ENCODE measurements at regions of chr2 and their contacts with region 1.

Region 1: GRCh38 chr2:197499594-197500526 is at the starts of genes HSPD1 and HSPE1:
- DNase-seq: peak; percentile 93 to 99 (median 97)
- ATAC-seq: peak; percentile 86
- H3K4me3 ChIP-seq: peak within 1 kb of the TSS; percentile 61 to 76
- H3K4me3 Mint-ChIP-seq: peak within 1 kb of the TSS; percentile 92
- H3K27ac ChIP-seq: peak within 1 kb of the TSS; percentile 96
- H3K27ac Mint-ChIP-seq: peak within 1 kb of the TSS; percentile 97
- H3K4me1 ChIP-seq: peaks cover 55% of the 10 kb centered on the region
- H3K4me1 Mint-ChIP-seq: peaks cover 62% of the 10 kb centered on the region
- H3K27me3 ChIP-seq: no peaks in the 10 kb centered on the region
- H3K27me3 Mint-ChIP-seq: no peaks in the 10 kb centered on the region
- CTCF ChIP-seq: no peak
- total RNA-seq, gene HSPD1: 162 to 163 TPM
- total RNA-seq, gene HSPE1: 76.7 to 76.8 TPM

Region 2: GRCh38 chr2:196926562-196927375 is 573.1 kb before region 1 on chr2 and contains the start of gene PGAP1:
- CTCF ChIA-PET with region 1: no interaction called
- POLR2A ChIA-PET with region 1: no interaction called
- intact Hi-C with region 1: loop called in 1 of 2 experiments (anchors 10 kb)
- DNase-seq: peak; percentile 65 to 91 (median 81)
- ATAC-seq: peak; percentile 74
- H3K4me3 ChIP-seq: peak within 1 kb of the TSS; percentile 88 to 96
- H3K4me3 Mint-ChIP-seq: peak within 1 kb of the TSS; percentile 97
- H3K27ac ChIP-seq: peak within 1 kb of the TSS; percentile 66 to 69
- H3K27ac Mint-ChIP-seq: peak within 1 kb of the TSS; percentile 90
- H3K4me1 ChIP-seq: peaks cover 23% of the 10 kb centered on the region
- H3K4me1 Mint-ChIP-seq: peaks cover 33% of the 10 kb centered on the region
- H3K27me3 ChIP-seq: no peaks in the 10 kb centered on the region
- H3K27me3 Mint-ChIP-seq: no peaks in the 10 kb centered on the region
- CTCF ChIP-seq: no peak
- total RNA-seq, gene PGAP1: 11.6 to 12.3 TPM

Region 3: GRCh38 chr2:197434541-197435513 is 65.0 kb before region 1 on chr2 and contains the start of gene SF3B1:
- CTCF ChIA-PET with region 1: no interaction called
- POLR2A ChIA-PET with region 1: interaction called, 41 read pairs
- intact Hi-C with region 1: loop called (anchors 1 to 2 kb)
- DNase-seq: peak; percentile 98 to 100 (median 99)
- ATAC-seq: peak; percentile 96
- H3K4me3 ChIP-seq: peak within 1 kb of the TSS; percentile 95 to 99
- H3K4me3 Mint-ChIP-seq: peak within 1 kb of the TSS; percentile 100
- H3K27ac ChIP-seq: peak within 1 kb of the TSS; percentile 98 to 99
- H3K27ac Mint-ChIP-seq: peak within 1 kb of the TSS; percentile 100
- H3K4me1 ChIP-seq: peaks cover 43% of the 10 kb centered on the region
- H3K4me1 Mint-ChIP-seq: peaks cover 53% of the 10 kb centered on the region
- H3K27me3 ChIP-seq: no peaks in the 10 kb centered on the region
- H3K27me3 Mint-ChIP-seq: no peaks in the 10 kb centered on the region
- CTCF ChIP-seq: no peak
- total RNA-seq, gene SF3B1: 525 to 526 TPM

Region 4: DNA sequence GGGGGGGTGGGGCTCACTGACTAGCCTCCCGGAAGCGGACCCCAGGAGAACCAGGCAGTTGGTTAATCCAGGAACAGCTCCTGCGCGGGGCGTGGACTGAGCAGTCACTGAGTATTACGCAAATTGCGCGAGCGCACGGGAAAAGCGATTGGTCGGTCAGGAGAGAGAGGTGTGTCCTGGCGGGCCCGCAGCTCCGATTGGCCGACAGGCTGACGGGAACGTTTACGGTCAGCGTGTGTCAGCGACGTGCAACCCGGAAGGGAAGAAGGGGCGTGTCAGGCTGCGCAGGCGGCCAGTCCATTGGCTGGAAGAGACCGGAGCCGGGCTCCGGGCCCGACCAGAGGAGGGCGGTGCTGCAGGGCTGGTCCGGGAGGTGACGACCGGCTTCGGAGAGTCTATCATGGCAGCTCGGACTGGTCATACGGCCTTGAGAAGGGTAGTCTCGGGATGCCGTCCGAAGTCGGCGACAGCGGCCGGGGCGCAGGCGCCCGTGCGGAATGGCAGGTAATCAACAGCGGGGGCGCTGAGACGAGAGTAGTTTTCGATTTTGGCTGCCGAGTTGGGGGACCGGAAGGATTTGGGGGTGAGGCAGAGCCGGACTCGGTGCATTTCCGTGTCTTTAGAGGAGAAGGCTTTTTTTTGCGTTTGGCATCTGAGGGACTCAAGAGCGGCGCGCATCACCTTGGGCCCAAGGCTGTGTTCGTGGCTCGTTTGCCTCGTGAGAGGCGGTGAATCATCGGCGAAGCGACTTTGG is 46.5 kb before region 1 on chr2 and contains the start of gene COQ10B:
- CTCF ChIA-PET with region 1: no interaction called
- POLR2A ChIA-PET with region 1: interaction called, 21 read pairs
- intact Hi-C with region 1: loop called (anchors 1 kb)
- DNase-seq: peak; percentile 95 to 100 (median 97)
- ATAC-seq: peak; percentile 87
- H3K4me3 ChIP-seq: peak within 1 kb of the TSS; percentile 62 to 74
- H3K4me3 Mint-ChIP-seq: peak within 1 kb of the TSS; percentile 99
- H3K27ac ChIP-seq: peak within 1 kb of the TSS; percentile 93 to 95
- H3K27ac Mint-ChIP-seq: peak within 1 kb of the TSS; percentile 100
- H3K4me1 ChIP-seq: peaks cover 28% of the 10 kb centered on the region
- H3K4me1 Mint-ChIP-seq: peaks cover 48% of the 10 kb centered on the region
- H3K27me3 ChIP-seq: no peaks in the 10 kb centered on the region
- H3K27me3 Mint-ChIP-seq: no peaks in the 10 kb centered on the region
- CTCF ChIP-seq: no peak
- total RNA-seq, gene COQ10B: 66.9 to 67.6 TPM

Region 5: DNA sequence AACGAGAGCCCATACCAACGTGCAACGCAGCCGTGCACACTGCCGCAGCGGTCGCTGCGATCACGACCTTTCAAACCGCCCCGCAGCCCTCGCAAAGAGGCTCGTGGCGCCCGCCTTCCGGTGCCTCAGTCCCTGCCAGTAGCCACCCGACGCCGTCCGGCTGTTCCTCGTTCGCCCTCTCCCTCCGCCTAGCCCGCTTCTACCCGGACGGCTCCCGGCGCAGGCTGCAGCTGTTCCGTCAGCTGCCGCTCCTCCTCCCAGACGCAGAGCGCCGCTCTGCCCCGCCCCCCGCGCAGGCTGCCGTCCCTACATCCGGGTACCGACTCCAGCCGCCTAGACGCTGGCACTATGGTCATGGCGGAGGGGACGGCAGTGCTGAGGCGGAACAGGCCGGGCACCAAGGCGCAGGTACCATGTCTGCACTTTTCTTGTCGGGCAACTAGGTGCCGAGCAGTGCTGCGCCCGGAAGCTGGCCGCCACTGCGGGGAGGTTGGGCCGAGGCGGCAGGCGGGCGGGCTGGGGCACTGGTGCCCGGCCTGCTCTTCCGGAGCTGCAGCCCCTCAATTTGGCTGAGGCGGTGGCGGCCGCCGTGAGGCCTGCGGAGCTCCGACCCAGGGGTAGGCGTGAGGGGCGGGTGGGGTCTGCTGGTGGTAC is 16.0 kb after region 1 on chr2 and contains the start of gene MOB4:
- CTCF ChIA-PET with region 1: interaction called, 5 read pairs
- POLR2A ChIA-PET with region 1: interaction called, 146 read pairs
- intact Hi-C with region 1: loop called (anchors 1 kb)
- DNase-seq: peak; percentile 90 to 97 (median 93)
- ATAC-seq: peak; percentile 90
- H3K4me3 ChIP-seq: peak within 1 kb of the TSS; percentile 73 to 94
- H3K4me3 Mint-ChIP-seq: peak within 1 kb of the TSS; percentile 92
- H3K27ac ChIP-seq: peak within 1 kb of the TSS; percentile 88 to 99
- H3K27ac Mint-ChIP-seq: peak within 1 kb of the TSS; percentile 93
- H3K4me1 ChIP-seq: peaks cover 22% of the 10 kb centered on the region
- H3K4me1 Mint-ChIP-seq: peaks cover 44% of the 10 kb centered on the region
- H3K27me3 ChIP-seq: no peaks in the 10 kb centered on the region
- H3K27me3 Mint-ChIP-seq: no peaks in the 10 kb centered on the region
- CTCF ChIP-seq: no peak
- total RNA-seq, gene MOB4: 32.1 to 36.5 TPM

Region 6: DNA sequence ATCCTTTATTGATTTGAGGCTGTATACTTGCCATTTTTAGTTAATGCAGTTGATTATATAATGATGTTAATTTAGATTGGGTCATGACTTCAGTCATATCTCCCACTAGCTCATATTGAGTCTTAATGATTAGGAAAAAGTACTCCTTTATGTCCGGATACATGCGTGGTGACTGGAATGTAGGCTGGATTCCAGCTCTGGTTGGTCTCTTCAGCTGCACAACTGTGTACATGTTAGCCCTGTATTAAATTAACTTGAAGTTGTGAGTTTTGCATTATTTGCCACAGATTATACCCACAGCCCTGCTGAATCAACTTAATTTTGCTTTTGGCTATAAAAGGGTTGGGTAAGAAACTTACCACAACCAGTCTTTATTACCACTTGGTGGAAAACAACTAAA is 38.6 kb after region 1 on chr2:
- CTCF ChIA-PET with region 1: no interaction called
- POLR2A ChIA-PET with region 1: no interaction called
- intact Hi-C with region 1: loop called in 1 of 2 experiments (anchors 5 kb)
- DNase-seq: no peak
- ATAC-seq: no peak
- H3K4me3 ChIP-seq: no peak overlapping the region
- H3K4me3 Mint-ChIP-seq: no peak overlapping the region
- H3K27ac ChIP-seq: no peak overlapping the region
- H3K27ac Mint-ChIP-seq: no peak overlapping the region
- H3K4me1 ChIP-seq: peaks cover 14% of the 10 kb centered on the region
- H3K4me1 Mint-ChIP-seq: peaks cover 44% of the 10 kb centered on the region
- H3K27me3 ChIP-seq: no peaks in the 10 kb centered on the region
- H3K27me3 Mint-ChIP-seq: no peaks in the 10 kb centered on the region
- CTCF ChIP-seq: no peak

Region 7: GRCh38 chr2:197599285-197599965 is 99.6 kb after region 1 on chr2:
- CTCF ChIA-PET with region 1: no interaction called
- POLR2A ChIA-PET with region 1: no interaction called
- intact Hi-C with region 1: loop called in 1 of 2 experiments (anchors 1 kb)
- DNase-seq: peak in 8 of 9 experiments; percentile 4 to 67 (median 40)
- ATAC-seq: peak; percentile 99
- H3K4me3 ChIP-seq: no peak overlapping the region
- H3K4me3 Mint-ChIP-seq: peak overlapping the region; percentile 57
- H3K27ac ChIP-seq: no peak overlapping the region
- H3K27ac Mint-ChIP-seq: no peak overlapping the region
- H3K4me1 ChIP-seq: peaks cover 4% of the 10 kb centered on the region
- H3K4me1 Mint-ChIP-seq: peaks cover 5% of the 10 kb centered on the region
- H3K27me3 ChIP-seq: no peaks in the 10 kb centered on the region
- H3K27me3 Mint-ChIP-seq: peaks cover 4% of the 10 kb centered on the region
- CTCF ChIP-seq: peak; percentile 38

Region 8: DNA sequence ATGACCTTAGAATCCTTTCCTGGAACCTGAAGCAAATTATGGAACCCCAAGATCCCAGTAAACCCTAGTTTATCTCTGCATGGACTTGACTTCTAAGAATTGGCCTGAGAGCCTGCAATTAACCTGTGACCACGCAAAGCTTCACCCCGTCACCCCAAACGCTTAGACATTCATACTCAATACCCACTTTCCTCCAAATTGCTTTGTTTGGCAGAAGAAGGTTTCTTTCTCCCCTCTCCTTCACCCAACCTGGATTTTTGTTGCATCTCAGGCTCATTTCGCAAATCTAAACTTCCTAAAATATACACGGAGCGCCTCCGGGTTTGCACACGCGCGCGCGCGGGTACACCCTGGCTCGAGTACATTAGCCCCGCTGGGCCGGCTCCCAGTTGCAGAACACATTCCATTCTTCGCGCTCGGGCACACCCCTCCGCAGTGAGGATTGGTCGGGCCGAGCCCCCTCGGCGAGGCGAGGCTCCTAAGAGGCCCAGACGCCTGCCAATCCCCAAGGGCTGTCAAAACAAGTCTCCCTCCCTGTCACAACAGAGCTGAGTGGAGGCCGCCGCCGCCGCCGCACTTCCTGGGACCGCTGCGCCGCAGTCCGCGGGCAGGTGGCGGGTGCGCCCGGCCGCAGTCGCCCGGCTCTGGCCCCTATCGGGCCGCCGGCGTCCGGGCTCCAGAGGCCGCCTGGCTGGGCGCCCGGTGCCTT is 304.3 kb after region 1 on chr2 and contains the start of gene PLCL1:
- CTCF ChIA-PET with region 1: no interaction called
- POLR2A ChIA-PET with region 1: no interaction called
- intact Hi-C with region 1: no loop called
- DNase-seq: peak; percentile 77 to 94 (median 88)
- ATAC-seq: peak; percentile 98
- H3K4me3 ChIP-seq: peak within 1 kb of the TSS; percentile 67 to 70
- H3K4me3 Mint-ChIP-seq: peak within 1 kb of the TSS; percentile 92
- H3K27ac ChIP-seq: peak within 1 kb of the TSS in 1 of 2 experiments; percentile 53
- H3K27ac Mint-ChIP-seq: peak within 1 kb of the TSS; percentile 89
- H3K4me1 ChIP-seq: peaks cover 44% of the 10 kb centered on the region
- H3K4me1 Mint-ChIP-seq: peaks cover 44% of the 10 kb centered on the region
- H3K27me3 ChIP-seq: no peaks in the 10 kb centered on the region
- H3K27me3 Mint-ChIP-seq: no peaks in the 10 kb centered on the region
- CTCF ChIP-seq: no peak
- total RNA-seq, gene PLCL1: 8.2 to 8.3 TPM